H1 (cell line): ENCODE measurements at regions of chr17 and their contacts with region 1.

Region 1: DNA sequence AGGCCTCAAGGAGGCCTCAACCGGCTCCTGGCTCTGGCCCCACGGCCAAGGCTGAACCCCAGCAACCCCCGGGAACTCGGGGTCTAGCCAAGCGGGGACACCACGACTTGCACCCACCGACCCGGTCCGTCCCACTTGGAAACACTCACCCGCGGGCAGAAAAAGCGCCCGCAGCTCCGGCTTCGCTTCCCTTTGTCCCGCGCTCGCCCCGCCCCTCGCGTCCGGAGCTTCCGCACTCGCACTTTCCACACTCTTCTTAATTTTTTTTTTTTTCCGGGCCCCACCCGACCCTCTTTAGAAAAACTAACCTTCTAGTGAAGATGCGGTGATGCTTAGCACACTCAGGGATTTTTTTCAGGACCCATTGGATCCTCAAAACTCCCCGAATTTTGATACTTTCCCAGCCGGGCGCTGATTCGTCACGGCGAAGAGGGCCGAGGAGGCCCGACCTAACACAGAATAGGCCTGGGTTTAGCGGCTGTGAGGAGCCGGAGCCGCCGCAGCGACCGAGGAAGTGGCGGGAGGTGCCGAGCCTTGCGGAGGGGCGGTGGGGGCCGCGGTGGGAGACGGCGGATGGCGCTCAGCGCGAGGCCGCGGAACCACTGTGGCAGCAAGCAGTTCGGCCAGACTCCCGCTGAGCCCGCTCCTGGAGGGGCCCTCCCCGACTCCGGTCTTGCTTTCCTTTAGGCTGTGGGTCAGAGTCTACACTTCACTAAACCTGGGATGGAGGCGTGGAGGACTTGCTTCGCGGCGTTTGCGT is at the start of gene SMARCE1:
- DNase-seq: peak in 1 of 2 experiments; percentile 82
- H3K4me3 ChIP-seq: peak within 1 kb of the TSS; percentile 91 to 100 (median 96)
- H3K27ac ChIP-seq: peak within 1 kb of the TSS; percentile 93
- H3K4me1 ChIP-seq: peaks cover 0 to 7% (median 4%) of the 10 kb centered on the region in 4 experiments; a peak in 2 of 7 replicates
- H3K27me3 ChIP-seq: no peaks in the 10 kb centered on the region
- CTCF ChIP-seq: no peak
- EP300 ChIP-seq: peak in 1 of 2 experiments; percentile 90; a peak in 1 of 3 replicates
- POLR2A ChIP-seq: peak; percentile 49 to 78
- RAD21 ChIP-seq: no peak
- total RNA-seq, gene SMARCE1: 131 and 142 TPM in 2 replicates

Region 2: GRCh38 chr17:40625311-40625710 is 22.5 kb before region 1 on chr17:
- CTCF ChIA-PET with region 1: interaction called, 4 read pairs
- POLR2A ChIA-PET with region 1: interaction called, 58 read pairs
- DNase-seq: no peak
- H3K4me3 ChIP-seq: no peak overlapping the region
- H3K27ac ChIP-seq: no peak overlapping the region
- H3K4me1 ChIP-seq: no peaks in the 10 kb centered on the region; a peak in 1 of 7 replicates
- H3K27me3 ChIP-seq: no peaks in the 10 kb centered on the region
- CTCF ChIP-seq: no peak
- EP300 ChIP-seq: no peak
- POLR2A ChIP-seq: no peak
- RAD21 ChIP-seq: no peak

Region 3: DNA sequence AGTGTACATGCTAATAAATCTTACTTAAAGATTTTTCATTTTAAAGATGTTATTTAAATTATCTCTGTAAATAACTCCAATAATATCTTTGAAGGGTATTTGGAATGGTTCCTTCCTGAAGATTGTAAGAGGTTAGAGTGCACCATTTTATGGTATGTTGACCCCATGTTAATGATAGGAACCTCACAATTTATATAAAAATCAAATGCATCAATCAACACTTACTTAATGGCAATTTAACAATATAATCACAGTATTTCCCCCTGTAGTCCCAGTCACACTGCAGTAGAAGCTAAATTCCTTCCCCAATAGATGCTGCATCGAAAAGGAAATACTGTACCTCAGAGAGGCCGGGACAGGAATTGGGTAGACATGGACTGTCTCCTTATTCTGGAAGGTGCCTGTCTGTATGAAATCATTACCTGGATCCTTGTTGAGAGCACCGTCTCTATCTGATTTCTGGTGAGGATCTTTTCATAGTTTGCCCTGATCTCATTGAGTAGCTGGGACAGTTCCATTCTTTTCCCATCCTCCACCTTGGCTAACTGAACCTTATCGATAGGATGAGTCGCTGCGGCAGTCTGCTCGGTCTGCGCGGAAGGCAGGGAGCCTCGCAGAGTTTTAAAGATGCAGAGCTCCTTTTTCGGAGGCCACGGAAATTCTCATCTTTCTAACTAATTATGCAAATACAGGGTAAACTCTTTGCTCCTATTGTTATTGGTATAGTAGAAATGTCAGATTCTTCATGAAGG is 17.0 kb after region 1 on chr17 and contains the start of gene KRT222:
- CTCF ChIA-PET with region 1: interaction called, 3 read pairs
- POLR2A ChIA-PET with region 1: interaction called, 15 read pairs
- DNase-seq: no peak
- H3K4me3 ChIP-seq: peak within 1 kb of the TSS in 3 of 4 experiments; percentile 8 to 54 (median 30); a peak in 3 of 8 replicates
- H3K27ac ChIP-seq: no peak within 1 kb of the TSS
- H3K4me1 ChIP-seq: peaks cover 0 to 2% (median 0%) of the 10 kb centered on the region in 4 experiments; a peak in 2 of 7 replicates
- H3K27me3 ChIP-seq: no peaks in the 10 kb centered on the region
- CTCF ChIP-seq: no peak
- EP300 ChIP-seq: no peak
- POLR2A ChIP-seq: no peak
- RAD21 ChIP-seq: no peak
- total RNA-seq, gene KRT222: 0.61 and 0.75 TPM in 2 replicates